ENCODE measurements at regions of chr3 and their contacts with region 1.

Region 1: DNA sequence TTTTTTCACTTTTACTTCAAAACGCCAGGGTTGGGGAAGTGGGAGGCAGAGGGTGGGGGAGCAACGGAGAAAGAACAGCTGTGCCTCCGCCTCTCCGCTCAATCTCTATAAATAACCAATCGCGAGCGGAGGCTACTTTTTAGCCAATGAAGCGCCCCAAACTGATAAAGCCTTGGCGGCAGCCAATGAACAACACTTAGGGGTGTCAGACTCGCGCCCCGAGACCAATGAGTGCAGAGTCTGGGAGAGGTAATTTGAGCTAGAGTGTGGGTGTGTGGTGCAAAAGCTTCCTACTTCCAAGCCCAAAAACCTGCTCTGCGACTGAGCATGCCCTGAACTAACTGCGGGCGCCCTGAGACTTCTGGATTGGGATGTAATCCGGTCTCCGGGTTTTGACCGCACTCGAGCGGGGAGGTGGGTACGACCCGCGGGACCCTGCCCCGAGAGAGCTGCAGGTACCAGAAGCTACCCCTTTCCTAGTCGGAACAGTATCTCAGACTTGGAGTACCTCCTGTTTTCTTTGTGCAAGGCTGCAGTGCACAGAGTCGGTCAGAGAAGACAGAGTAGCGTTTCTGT is 800 bp upstream of the RAP2B start:
- DNase-seq: peak; percentile 68 to 94 (median 88)
- H3K4me3 ChIP-seq: peak overlapping the region; percentile 60 to 95 (median 86)
- H3K27ac ChIP-seq: peak overlapping the region; percentile 15 to 96 (median 90)
- H3K27me3 ChIP-seq: no peaks in the 10 kb centered on the region
- CTCF ChIP-seq: peak in 11 of 56 donors; percentile 1 to 36 (median 10)

Region 2: DNA sequence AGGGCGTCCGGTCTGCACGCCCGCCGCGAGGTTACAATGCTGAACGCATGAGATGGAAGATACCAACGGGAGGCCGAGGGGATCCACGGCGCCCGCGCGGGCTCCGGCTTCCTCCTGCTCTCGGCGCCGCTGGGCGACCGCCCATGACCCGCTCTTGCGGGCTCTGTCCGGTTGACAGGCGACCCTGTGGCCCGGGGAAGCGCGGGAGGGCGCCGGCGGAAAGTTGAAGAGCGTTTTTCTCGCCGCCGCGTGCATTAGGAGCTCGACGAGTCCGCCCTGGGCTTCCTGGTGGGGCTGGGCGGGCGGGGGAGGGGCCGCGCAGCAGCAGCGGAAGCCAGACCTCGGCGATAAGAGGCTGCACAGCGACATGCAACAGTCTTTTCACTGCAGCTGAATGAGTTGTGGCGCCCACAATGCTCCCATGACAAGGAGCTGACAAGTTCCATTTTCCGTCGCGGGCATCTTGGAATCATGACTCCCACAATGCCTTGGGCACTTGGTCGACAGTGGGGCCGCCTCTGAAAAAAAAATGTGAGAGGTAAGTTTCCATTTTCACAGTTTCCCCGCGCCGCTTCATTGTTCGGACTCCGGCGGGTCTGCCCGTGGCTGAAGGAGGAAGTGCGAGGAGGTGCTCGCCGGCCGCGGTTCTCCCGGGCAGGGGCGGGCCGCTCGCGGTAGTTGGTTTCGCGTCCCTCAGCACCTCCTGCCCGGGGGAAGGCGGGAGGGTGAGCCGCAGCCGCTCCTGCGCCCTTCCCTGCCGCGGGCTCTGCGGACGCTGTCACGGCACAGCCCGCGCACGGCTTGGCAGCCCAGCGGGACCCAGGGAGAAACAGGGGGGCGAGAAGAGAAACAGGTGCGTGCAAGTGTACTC is 892.4 kb before region 1 on chr3 and contains the start of gene MBNL1:
- intact Hi-C with region 1: loop called in 1 of 2 experiments (anchors 5 kb)
- DNase-seq: peak; percentile 61 to 84 (median 78)
- H3K4me3 ChIP-seq: peak within 1 kb of the TSS; percentile 62 to 97 (median 89)
- H3K27ac ChIP-seq: peak within 1 kb of the TSS; percentile 88 to 100 (median 99)
- H3K27me3 ChIP-seq: no peaks in the 10 kb centered on the region
- CTCF ChIP-seq: peak in 21 of 56 donors; percentile 3 to 37 (median 17)
- total RNA-seq, gene MBNL1: 106 to 168 (median 132) TPM

Region 3: DNA sequence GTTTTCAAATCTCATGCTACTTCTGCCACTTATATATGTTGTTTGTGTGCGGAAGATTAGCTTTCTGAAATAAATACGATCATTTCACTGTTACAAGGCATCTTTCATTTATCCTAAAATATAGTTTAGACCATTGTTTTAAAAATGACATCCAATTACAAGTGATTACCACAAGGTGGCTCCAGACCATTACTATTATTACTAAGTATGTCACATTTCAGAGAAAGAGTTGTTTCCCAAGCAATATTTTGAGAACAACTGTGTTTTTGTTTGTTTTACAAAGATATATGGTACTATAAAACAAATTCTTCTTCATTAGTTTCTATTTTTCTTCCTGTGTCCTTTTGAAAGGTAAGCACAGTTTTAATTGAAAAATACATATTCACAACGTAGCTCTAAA is 135.2 kb before region 1 on chr3:
- intact Hi-C with region 1: loop called in 1 of 2 experiments (anchors 5 kb)
- DNase-seq: no peak
- H3K4me3 ChIP-seq: no peak overlapping the region
- H3K27ac ChIP-seq: no peak overlapping the region
- H3K27me3 ChIP-seq: no peaks in the 10 kb centered on the region
- CTCF ChIP-seq: peak; percentile 49 to 80 (median 71)

Region 4: DNA sequence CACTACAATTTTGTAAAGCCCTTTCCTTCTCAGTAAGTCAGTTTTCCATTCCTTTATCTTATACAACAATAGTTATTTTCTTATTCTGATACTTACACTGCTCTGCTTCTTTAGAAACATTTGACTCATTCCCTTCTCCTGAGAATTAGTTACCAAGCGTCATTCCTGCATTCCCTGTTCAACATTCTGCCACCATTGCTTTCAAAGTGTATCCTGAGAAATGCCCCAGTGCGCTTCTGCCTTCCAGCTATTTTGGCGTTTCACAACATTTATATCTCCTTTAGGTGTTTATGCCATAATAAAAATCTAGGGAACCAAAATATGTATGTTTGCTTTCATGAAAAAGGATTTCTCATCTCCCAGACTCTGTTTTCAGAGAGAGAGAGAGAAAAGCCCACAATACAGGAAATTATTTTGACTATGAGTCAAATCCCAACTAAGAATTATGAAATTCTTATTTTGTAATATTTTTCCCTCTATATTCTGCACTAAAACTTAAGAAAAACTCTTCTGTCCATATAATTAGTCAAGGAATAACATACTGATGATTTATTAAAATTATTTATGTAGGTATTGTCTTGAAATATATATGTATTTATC is 117.4 kb before region 1 on chr3:
- intact Hi-C with region 1: loop called in 1 of 2 experiments (anchors 5 kb)
- DNase-seq: no peak
- H3K4me3 ChIP-seq: peak overlapping the region in 11 of 59 donors; percentile 36 to 56 (median 46)
- H3K27ac ChIP-seq: no peak overlapping the region
- H3K27me3 ChIP-seq: peaks cover 0 to 5% (median 0%) of the 10 kb centered on the region in 45 donors
- CTCF ChIP-seq: no peak

Region 5: GRCh38 chr3:154323891-154324738 is 1162.9 kb after region 1 on chr3 and contains the start of gene DHX36:
- intact Hi-C with region 1: loop called in 1 of 2 experiments (anchors 5 kb)
- DNase-seq: peak; percentile 81 to 93 (median 92)
- H3K4me3 ChIP-seq: peak within 1 kb of the TSS; percentile 61 to 97 (median 82)
- H3K27ac ChIP-seq: peak within 1 kb of the TSS; percentile 21 to 93 (median 86)
- H3K27me3 ChIP-seq: no peaks in the 10 kb centered on the region
- CTCF ChIP-seq: peak in 8 of 56 donors; percentile 5 to 44 (median 18)
- total RNA-seq, gene DHX36: 49.3 to 112 (median 84.4) TPM

Measured in dorsolateral prefrontal cortex (tissue), 120 donors.